OCI-LY7 (cell line): ENCODE measurements at regions of chr12 and their contacts with region 1.

Region 1: DNA sequence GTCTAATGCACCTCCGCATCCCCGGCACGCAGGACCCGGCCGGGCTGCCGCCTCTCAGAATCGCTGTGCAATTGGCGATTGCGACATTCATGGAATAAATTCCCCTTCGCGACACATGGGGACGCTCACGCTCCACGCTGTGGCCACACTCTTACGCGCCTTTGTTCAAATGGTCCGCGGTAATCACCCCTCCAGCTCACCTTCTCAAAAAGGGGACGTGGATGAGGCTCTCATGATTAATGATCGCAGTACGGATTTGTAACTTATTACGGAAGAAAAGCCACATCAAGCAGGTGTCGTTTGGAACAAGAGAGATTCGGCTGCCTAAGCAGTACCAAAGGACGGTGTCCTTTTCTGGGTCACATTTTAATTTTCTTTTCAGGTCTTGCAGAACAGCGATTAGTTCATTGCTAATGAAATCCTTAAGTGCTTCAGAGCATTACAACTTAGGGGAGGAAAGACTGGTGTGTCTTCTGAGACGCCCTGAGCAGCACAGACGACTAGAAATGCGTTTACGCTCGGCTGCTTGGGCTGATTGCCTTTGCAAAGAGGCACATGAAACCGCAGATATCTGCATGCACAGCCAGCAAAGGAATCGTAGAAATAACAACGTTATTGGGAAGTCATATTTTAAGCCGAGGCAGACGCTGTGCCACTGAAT is 37.3 kb upstream of the ADGRD1 start:
- DNase-seq: peak; percentile 83
- H3K4me3 ChIP-seq: peak overlapping the region; percentile 43
- H3K27ac ChIP-seq: peak overlapping the region; percentile 7
- H3K4me1 ChIP-seq: peaks cover 14% of the 10 kb centered on the region
- CTCF ChIP-seq: peak; percentile 99

Region 2: GRCh38 chr12:130980939-130981742 is 64.8 kb after region 1 on chr12:
- CTCF ChIA-PET with region 1: no interaction called
- POLR2A ChIA-PET with region 1: no interaction called
- intact Hi-C with region 1: loop called (anchors 1 kb)
- DNase-seq: peak; percentile 85
- H3K4me3 ChIP-seq: peak overlapping the region; percentile 55
- H3K27ac ChIP-seq: peak overlapping the region; percentile 97
- H3K4me1 ChIP-seq: peaks cover 69% of the 10 kb centered on the region
- CTCF ChIP-seq: peak; percentile 28; the same call in 1 of the 2 replicates

Region 3: DNA sequence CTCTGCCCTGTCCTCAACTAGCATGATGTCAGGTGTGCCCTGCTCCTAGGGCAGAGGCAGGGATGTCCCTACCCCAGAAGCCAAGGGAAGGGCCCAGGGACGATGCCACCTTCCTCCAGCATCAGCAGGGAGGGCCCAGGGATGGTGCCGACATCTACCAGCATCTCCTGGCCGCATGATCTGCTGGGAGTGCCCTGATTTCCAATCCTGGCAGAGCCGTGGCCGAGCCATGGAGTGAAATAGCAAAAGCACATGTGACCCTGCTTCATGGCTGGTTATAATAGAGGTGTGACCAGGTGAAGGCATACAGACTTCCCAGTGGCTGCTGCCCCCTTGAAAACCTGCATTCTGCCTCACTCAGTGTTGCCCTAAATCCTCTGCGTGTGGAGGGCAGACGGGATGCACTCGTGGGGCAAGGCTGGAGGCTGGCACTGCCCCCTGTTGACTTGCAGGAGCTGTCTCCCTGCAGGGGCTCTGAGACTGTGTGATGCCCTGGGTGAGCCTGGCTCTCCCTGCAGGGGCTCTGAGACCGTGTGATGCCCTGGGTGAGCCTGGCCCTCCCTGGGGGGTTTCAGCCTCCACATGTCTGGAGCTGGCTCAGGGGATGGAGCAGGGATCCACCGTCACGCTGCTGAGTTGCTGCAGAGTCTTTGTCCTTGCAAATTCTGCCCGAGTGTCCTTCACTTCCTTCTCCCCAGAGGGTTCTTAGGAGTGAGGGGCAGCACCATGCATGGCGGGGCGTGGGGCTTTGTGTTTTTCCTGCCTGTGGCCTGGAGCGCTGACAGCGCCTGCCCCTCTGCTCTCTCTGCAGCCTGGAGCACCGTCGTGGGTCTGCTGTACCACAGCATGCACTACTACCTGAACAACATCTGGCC is 89.0 kb after region 1 on chr12:
- CTCF ChIA-PET with region 1: no interaction called
- POLR2A ChIA-PET with region 1: interaction called, 3 read pairs
- intact Hi-C with region 1: loop called (anchors 1 kb)
- DNase-seq: peak; percentile 34
- H3K4me3 ChIP-seq: no peak overlapping the region
- H3K27ac ChIP-seq: no peak overlapping the region
- H3K4me1 ChIP-seq: peaks cover 30% of the 10 kb centered on the region
- CTCF ChIP-seq: peak; percentile 52

Region 4: GRCh38 chr12:131035268-131035681 is 118.9 kb after region 1 on chr12:
- CTCF ChIA-PET with region 1: no interaction called
- POLR2A ChIA-PET with region 1: no interaction called
- intact Hi-C with region 1: loop called (anchors 10 kb)
- DNase-seq: peak; percentile 88
- H3K4me3 ChIP-seq: peak overlapping the region; percentile 63
- H3K27ac ChIP-seq: peak overlapping the region; percentile 94
- H3K4me1 ChIP-seq: peaks cover 52% of the 10 kb centered on the region
- CTCF ChIP-seq: no peak

Region 5: GRCh38 chr12:131104463-131105350 is 188.3 kb after region 1 on chr12:
- CTCF ChIA-PET with region 1: interaction called, 4 read pairs
- POLR2A ChIA-PET with region 1: no interaction called
- intact Hi-C with region 1: loop called (anchors 10 kb)
- DNase-seq: peak; percentile 70
- H3K4me3 ChIP-seq: no peak overlapping the region
- H3K27ac ChIP-seq: no peak overlapping the region
- H3K4me1 ChIP-seq: peaks cover 10% of the 10 kb centered on the region
- CTCF ChIP-seq: peak; percentile 87

Region 6: DNA sequence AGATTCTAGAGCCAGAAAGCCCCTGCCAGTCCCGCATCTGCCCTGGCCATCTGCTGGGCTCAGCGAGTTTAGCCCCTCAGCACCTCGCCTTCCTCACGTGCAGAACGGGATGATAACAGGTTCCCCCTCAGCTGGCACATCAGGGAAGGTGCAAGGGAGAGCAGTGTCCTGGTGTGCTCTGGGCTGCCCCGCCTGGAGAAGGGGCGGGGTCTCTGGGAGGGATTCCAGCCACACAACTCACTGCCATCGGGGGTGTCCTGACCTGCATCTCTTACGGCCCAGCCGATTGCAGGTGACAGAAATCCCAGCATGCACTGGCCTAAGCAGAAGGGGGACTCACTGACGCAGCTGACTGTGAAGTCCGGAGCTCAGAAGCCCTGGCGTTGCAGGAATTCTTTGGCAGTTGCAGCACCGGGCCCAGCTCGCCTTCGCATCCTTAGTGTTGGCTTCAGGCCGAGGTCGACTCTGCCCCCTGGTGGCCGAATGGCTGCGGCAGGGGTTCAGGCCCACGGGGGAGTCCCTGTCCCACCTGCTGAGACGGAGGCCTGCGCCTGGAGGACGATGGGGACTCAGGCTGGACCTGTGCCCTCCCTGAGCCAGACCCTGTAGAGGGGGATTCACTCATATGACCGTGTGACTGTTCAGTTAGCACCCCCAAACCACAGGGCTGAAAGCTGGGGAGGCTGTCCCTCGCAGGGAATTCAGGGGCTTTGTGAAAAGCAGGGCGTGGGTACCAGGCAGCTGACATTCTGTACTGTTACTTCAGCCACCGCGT is 215.9 kb after region 1 on chr12:
- CTCF ChIA-PET with region 1: interaction called, 11 read pairs
- POLR2A ChIA-PET with region 1: interaction called, 4 read pairs
- intact Hi-C with region 1: loop called (anchors 1 kb)
- DNase-seq: peak; percentile 73
- H3K4me3 ChIP-seq: no peak overlapping the region
- H3K27ac ChIP-seq: no peak overlapping the region
- H3K4me1 ChIP-seq: no peaks in the 10 kb centered on the region
- CTCF ChIP-seq: peak; percentile 90

Region 7: DNA sequence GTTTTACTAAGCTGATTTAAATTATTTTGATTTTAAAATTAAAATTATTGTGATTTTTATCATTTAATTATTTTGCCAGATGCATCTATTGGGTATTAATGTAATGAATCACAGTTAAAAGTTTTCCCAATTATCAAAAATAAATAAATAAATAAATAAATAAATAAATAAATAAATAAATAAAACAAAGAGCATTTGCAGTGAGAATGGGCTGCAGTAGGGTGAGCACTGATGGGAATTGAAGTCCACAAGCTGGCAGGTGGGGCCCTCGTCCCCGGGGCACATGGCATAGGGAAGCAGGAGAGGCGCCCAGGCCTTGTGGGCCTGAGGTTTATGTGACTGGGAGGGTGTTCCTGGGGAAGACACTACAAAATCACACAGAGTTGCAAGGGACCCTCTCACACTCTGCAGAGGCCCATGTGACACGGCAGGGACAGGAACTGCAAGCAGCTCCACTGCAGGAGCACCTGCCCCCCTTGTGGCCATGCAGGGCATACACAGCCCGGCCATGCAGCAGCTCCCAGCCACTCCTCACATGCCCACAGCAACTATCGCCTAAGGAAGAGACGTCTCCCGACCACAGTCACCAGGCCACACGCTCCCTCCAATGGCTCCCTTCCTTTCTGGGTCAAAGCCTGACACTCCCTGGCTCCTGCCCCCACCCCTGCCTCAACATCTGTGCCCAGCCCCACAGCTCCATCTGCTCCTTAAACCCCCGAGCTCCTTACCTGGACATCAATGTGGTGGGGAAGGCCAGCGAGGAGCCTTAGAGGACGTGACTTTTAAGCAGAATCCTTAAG is 538.2 kb after region 1 on chr12:
- CTCF ChIA-PET with region 1: no interaction called
- POLR2A ChIA-PET with region 1: no interaction called
- intact Hi-C with region 1: loop called (anchors 2 kb)
- DNase-seq: peak; percentile 70
- H3K4me3 ChIP-seq: no peak overlapping the region
- H3K27ac ChIP-seq: no peak overlapping the region
- H3K4me1 ChIP-seq: no peaks in the 10 kb centered on the region
- CTCF ChIP-seq: peak; percentile 73